ENCODE measurements at regions of chr17 and their contacts with region 1.

Region 1: DNA sequence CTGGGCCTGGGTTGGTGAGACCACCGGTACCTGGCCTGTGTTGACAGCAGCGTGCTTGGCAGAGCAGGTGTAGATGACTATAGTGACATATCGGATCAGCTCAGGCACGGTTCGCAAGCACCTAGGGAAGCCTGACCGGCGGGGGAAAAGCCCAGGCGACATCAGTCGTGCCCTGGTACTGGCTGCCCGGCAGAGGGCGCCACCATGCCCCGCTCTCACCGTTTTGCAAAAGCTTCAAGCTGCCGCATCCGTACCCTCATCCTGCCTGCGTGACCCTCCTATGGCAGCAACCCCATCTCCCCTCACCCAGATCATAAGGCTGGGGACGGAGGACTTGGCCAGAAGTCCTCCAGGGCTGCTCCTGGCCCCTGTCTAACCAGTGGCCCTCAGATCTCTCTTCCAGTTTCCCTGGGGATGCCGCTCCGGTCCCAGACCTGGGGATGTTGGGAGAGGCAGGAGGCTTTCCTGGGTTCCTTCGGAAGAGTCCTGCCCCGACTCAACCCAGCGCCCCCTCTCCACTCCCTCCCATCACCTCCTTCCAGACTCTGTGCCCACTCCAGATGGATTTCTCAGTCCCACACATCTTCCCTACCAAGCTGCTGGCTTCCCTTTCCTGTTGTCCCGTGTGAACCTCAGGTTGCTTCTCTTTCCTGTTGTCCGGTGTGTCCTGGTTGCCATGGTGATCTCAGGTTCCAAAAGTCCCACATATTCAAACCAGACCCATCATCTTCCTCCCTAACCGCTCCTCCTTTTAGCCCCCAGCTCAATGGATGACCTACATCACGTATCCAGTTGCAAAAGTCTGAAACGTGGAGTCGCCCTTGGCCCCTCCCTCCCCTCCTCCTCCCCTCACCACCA is 13.7 kb downstream of the ALOX12B start:
- DNase-seq: peak; percentile 92
- ATAC-seq: peak; percentile 82
- H3K4me3 Mint-ChIP-seq: peak overlapping the region; percentile 76
- H3K27ac Mint-ChIP-seq: no peak overlapping the region
- H3K4me1 Mint-ChIP-seq: peaks cover 23% of the 10 kb centered on the region
- H3K27me3 Mint-ChIP-seq: peaks cover 96% of the 10 kb centered on the region
- CTCF ChIP-seq: peak; percentile 89

Region 2: DNA sequence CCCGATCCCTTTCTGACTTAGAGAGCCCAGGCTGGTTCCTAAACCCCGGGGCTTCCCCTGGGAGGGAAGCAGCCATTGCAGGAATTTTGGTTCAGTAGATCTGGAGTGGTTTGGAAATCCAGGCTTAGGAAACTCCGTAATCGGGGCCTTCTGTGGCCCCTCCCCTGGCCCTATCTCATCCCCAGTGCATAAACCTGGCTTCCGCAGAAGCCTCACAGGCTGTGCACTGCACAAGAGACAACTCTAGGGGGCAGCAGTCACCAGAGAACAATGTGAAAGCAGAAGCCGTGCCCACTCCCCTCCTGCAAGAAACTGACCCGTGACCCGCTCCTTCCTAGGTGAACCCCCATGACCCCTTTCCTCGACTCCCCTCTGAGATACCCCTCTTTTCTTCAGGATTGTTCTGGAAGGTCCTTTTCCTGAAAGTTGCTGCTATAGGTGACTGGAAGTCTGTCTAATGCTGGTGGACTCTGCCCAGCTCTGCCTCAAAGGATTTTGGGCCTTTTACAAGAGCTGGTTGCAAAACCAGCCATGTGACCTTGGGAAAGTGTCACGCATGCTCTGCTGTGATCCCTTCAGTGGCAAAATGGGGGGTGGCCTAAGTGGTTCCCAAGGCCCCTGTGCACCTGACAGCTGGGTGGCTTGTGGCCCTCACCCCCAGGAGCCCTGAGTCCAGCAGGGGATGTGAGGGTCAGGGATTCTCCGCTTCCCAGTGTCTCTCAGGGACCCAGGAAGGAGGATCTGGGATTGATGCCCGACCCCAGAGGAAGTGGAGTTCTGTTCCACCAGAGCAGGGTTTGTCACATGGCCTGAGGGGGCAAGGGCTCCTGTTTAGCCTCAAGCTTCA is 57.0 kb before region 1 on chr17:
- CTCF ChIA-PET with region 1: interaction called, 26 read pairs
- POLR2A ChIA-PET with region 1: no interaction called
- DNase-seq: peak; percentile 92
- ATAC-seq: peak; percentile 90
- H3K4me3 Mint-ChIP-seq: peak overlapping the region; percentile 84
- H3K27ac Mint-ChIP-seq: no peak overlapping the region
- H3K4me1 Mint-ChIP-seq: 0 out of 2 replicates have a peak, but pooled peaks cover 2% of the 10 kb centered on the region
- H3K27me3 Mint-ChIP-seq: peaks cover 23% of the 10 kb centered on the region
- CTCF ChIP-seq: peak; percentile 85

Region 3: DNA sequence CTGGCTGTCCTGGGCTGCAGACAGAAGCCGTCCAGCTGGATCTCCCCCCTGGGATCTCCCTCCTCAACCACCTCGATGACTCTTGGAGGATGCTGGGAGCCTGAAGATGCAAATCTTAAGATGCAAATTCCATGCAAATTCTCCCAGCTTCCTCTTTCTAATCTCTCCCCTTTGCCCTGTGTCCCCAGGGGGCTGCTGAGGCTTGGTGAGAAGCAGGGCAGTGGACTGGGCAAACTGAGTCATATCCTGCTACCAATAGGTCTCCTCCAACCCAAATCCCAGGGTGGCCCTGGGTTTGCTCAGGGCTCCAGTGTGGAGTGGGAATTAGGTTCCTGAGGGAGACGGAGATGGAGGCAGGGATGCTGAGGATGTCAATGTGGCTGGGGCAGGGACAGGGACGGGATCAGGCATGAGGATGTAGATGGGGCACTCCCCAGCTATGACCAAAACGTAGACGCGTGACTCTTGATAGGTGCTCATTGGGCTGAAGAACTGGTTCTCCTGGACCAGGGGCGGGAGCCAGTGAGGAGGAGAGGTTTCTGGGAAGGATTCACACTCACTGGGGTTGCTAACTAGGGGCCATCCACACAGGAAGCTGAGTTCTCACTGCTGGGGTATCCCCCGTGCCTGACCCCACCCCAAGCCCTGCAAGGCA is 17.3 kb after region 1 on chr17:
- CTCF ChIA-PET with region 1: interaction called, 91 read pairs
- POLR2A ChIA-PET with region 1: interaction called, 4 read pairs
- DNase-seq: no peak
- ATAC-seq: no peak; the same call in 1 of the 2 replicates
- H3K4me3 Mint-ChIP-seq: no peak overlapping the region
- H3K27ac Mint-ChIP-seq: no peak overlapping the region
- H3K4me1 Mint-ChIP-seq: peaks cover 16% of the 10 kb centered on the region
- H3K27me3 Mint-ChIP-seq: peaks cover 34% of the 10 kb centered on the region
- CTCF ChIP-seq: no peak

Region 4: DNA sequence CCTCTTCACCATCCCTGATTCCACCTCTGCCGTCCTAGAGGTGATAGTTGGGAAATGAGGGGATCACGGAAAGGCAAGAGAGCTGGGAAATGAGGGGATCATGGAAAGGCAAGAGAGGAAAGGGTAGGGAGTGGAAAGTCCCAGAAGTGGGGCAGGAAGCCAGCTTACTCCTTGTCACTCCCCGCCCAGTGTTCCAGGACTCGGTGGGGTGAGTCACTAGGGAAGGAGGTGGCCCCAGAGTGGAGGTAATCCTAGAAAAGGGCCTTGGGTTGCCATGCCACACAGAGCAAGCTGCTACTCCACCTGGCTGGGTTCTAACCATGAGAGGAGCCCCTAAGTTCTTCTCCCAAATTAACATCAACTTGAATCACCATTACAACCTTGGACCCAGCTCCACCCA is 29.7 kb after region 1 on chr17:
- CTCF ChIA-PET with region 1: interaction called, 134 read pairs
- POLR2A ChIA-PET with region 1: no interaction called
- DNase-seq: no peak
- ATAC-seq: no peak
- H3K4me3 Mint-ChIP-seq: no peak overlapping the region
- H3K27ac Mint-ChIP-seq: no peak overlapping the region
- H3K4me1 Mint-ChIP-seq: peaks cover 6% of the 10 kb centered on the region; the same call in 1 of the 2 replicates
- H3K27me3 Mint-ChIP-seq: peaks cover 27% of the 10 kb centered on the region
- CTCF ChIP-seq: no peak

Region 5: GRCh38 chr17:8109661-8110464 is 36.0 kb after region 1 on chr17:
- CTCF ChIA-PET with region 1: interaction called, 134 read pairs
- POLR2A ChIA-PET with region 1: no interaction called
- DNase-seq: peak; percentile 90
- ATAC-seq: peak; percentile 87
- H3K4me3 Mint-ChIP-seq: peak overlapping the region; percentile 71
- H3K27ac Mint-ChIP-seq: no peak overlapping the region
- H3K4me1 Mint-ChIP-seq: peaks cover 4% of the 10 kb centered on the region; the same call in 1 of the 2 replicates
- H3K27me3 Mint-ChIP-seq: peaks cover 79% of the 10 kb centered on the region
- CTCF ChIP-seq: peak; percentile 85

Region 6: GRCh38 chr17:8156246-8156992 is 82.6 kb after region 1 on chr17:
- CTCF ChIA-PET with region 1: interaction called, 14 read pairs
- POLR2A ChIA-PET with region 1: no interaction called
- DNase-seq: peak; percentile 100
- ATAC-seq: peak; percentile 67
- H3K4me3 Mint-ChIP-seq: no peak overlapping the region
- H3K27ac Mint-ChIP-seq: no peak overlapping the region
- H3K4me1 Mint-ChIP-seq: peaks cover 32% of the 10 kb centered on the region
- H3K27me3 Mint-ChIP-seq: peaks cover 3% of the 10 kb centered on the region; the same call in 1 of the 2 replicates
- CTCF ChIP-seq: no peak

Region 7: DNA sequence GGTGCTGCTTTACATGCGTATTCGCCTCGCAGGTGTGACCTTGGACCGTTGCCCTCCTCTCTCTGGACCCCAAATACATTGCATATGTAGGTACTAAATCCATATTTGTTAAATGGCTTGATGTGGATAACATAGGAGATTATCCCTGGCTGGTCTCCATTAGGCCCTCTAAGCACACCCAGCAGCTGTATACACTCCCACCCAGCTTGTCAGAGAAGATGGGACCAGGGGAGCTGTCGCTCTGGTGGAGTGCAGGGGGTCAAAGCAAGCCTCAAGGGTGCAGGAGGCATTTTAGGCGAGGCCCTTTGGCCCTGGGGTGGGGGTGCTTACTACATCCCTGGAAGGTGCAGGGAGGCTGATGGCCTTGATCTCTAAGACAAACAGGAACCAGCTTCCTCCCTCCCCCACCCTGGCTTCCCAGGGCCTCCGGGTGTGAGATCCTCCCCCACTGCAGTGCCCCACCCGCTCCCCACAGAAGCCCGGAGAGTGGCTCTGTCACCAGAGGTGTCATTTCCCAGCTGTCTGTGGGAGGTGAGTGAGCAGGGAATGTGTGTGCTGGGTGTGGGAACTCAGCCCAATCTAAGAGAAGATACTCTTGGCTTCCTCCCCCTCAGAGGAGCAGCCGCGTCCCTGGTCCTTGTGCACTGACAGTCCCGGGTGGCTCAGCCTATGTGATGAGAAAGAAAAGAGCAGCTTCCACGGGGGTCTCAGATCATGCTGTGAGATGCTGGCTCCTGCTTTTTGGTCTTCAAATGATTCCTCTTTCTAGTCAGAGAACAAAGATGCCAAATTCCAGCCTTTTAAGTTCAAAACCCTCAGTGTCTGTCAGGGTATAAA is 90.3 kb after region 1 on chr17:
- CTCF ChIA-PET with region 1: interaction called, 13 read pairs
- POLR2A ChIA-PET with region 1: no interaction called
- DNase-seq: no peak
- ATAC-seq: peak; percentile 6
- H3K4me3 Mint-ChIP-seq: peak overlapping the region; percentile 89
- H3K27ac Mint-ChIP-seq: peak overlapping the region; percentile 100
- H3K4me1 Mint-ChIP-seq: peaks cover 44% of the 10 kb centered on the region
- H3K27me3 Mint-ChIP-seq: no peaks in the 10 kb centered on the region
- CTCF ChIP-seq: no peak

Measured in WTC11 (cell line).